RWPE1 (cell line): ENCODE measurements at regions of chr18 and their contacts with region 1.

Region 1: GRCh38 chr18:10851824-10852319 is 297.5 kb downstream of the PIEZO2 start:
- DNase-seq: peak; percentile 57
- H3K27ac ChIP-seq: no peak overlapping the region
- CTCF ChIP-seq: peak; percentile 77

Region 2: DNA sequence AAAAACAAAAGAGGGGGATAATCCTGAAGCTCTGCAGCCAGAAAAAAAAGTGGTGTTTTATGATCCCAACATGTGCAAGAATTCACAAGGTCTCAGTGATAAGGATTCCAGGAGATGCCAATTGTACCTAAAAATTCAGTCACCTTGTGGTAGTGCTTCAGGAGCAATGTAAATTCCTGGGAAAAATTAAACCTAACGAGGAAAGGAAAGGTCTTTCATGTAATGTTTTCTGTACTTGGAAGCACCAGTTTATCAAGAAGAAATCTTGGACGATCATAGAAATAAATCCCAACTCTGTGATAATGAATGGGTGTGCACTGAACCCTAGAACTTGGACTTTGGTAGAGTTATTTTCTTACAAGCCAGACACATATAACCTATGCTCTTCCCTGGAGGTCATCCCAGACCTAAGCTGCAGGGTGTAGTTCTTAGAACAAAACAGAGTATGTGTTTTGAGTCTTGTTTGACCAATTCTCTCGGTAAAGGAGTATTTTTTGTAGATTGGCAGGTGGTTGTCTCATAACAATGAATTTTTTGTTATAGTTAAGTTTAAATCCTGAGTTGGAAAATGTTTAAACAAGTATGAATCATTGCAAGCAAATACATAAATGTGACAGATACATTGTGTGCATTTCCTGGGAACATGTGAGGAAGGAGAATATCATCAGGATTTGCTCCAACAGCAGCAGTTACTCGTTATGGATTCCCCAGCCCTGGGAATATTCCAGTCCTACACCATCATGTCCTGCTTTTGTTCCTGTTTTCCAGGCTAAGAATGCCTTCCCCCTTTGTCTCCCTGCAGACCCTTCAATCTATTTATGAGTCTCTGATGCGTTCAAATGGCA is 101.5 kb before region 1 on chr18:
- CTCF ChIA-PET with region 1: no interaction called
- POLR2A ChIA-PET with region 1: no interaction called
- DNase-seq: peak; percentile 11
- H3K27ac ChIP-seq: no peak overlapping the region
- CTCF ChIP-seq: no peak

Region 3: GRCh38 chr18:11040823-11041656 is 189.2 kb after region 1 on chr18:
- CTCF ChIA-PET with region 1: interaction called, 12 read pairs
- POLR2A ChIA-PET with region 1: no interaction called
- DNase-seq: peak; percentile 57
- H3K27ac ChIP-seq: no peak overlapping the region
- CTCF ChIP-seq: peak; percentile 65

Region 4: GRCh38 chr18:11154368-11154989 is 302.6 kb after region 1 on chr18:
- CTCF ChIA-PET with region 1: interaction called, 20 read pairs
- POLR2A ChIA-PET with region 1: no interaction called
- DNase-seq: peak; percentile 40
- H3K27ac ChIP-seq: no peak overlapping the region
- CTCF ChIP-seq: peak; percentile 25; the same call in 1 of the 2 replicates